Natural killer cell (primary cell): ENCODE measurements at regions of chr9 and their contacts with region 1.

Region 1: GRCh38 chr9:17462869-17463464 is 115.9 kb upstream of the SH3GL2 start:
- DNase-seq: peak in 1 of 2 donors; percentile 59
- ATAC-seq: peak in 1 of 3 donors; percentile 58
- H3K4me3 ChIP-seq: no peak overlapping the region
- H3K4me3 Mint-ChIP-seq: no peak overlapping the region
- H3K27ac ChIP-seq: no peak overlapping the region
- H3K27ac Mint-ChIP-seq: no peak overlapping the region
- H3K4me1 ChIP-seq: no peaks in the 10 kb centered on the region
- H3K4me1 Mint-ChIP-seq: no peaks in the 10 kb centered on the region
- H3K27me3 ChIP-seq: no peaks in the 10 kb centered on the region
- H3K27me3 Mint-ChIP-seq: no peaks in the 10 kb centered on the region
- CTCF ChIP-seq: peak; percentile 91

Region 2: DNA sequence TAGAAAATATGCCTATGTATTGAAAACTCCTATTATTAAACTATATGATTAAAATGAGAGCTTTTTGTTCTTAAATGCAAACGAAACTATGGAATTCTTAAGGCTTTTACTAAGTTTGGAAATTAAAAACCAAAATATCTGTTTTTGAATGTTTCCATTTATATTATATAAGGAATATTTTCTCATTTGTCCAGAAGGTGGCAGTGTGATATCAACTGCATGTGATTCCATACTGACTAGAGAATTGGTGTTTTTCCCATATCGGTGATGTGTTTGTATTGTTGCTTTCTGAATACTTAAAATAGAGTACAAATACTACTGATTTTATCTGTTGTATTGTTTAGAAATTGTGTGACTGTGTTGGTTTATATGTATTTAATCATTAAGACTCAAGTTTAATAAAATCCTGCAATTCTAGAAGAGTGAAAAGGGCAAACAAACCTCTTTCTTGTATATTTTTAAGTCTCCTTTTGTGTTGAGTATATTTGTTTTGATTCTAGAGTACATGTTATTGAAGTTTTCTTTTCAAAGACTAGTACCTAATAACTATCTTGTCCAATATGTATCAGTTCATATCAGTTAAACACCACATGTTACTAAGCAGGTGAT is 1589.3 kb before region 1 on chr9:
- intact Hi-C with region 1: loop called (anchors 1 kb)
- DNase-seq: peak in 1 of 2 donors; percentile 45
- ATAC-seq: peak in 1 of 3 donors; percentile 53
- H3K4me3 ChIP-seq: no peak overlapping the region
- H3K4me3 Mint-ChIP-seq: no peak overlapping the region
- H3K27ac ChIP-seq: no peak overlapping the region
- H3K27ac Mint-ChIP-seq: no peak overlapping the region
- H3K4me1 ChIP-seq: no peaks in the 10 kb centered on the region
- H3K4me1 Mint-ChIP-seq: no peaks in the 10 kb centered on the region
- H3K27me3 ChIP-seq: no peaks in the 10 kb centered on the region
- H3K27me3 Mint-ChIP-seq: no peaks in the 10 kb centered on the region
- CTCF ChIP-seq: peak; percentile 78

Region 3: DNA sequence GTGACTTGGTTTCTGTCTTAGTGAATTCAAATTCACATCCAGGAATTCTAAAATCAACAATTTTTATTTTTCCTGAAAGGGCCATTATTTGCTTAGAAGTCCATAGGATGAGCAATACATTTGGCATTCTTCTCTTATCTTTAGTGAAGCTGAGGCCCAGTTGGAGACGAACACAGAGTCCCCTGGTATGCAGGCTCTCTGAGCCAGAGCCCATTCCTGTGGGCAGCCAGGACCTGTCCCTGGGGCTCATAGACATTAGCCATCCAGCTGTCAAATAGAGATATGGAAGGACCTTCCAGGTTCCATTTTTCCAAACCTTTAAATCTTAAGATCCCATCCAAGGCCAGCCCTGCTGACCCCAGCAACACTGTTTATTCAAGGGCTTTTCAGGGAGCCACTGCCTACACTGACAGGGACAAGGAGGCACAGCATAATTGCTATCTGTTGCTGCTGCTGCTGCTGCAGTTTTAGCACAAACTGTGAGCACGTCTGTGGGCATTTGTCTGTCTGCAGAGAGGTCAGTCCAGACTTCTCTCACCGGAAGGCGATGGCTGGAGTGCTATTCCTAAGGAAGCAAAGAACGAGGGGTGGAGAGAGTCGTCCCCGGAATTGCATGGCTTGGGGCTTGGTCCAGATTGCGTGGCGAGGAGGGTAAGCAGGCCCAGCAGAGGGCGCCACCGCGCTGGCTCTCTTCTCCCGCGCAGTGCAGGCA is 1271.1 kb before region 1 on chr9:
- intact Hi-C with region 1: loop called (anchors 1 kb)
- DNase-seq: peak; percentile 29 to 50
- ATAC-seq: peak; percentile 38 to 84 (median 67)
- H3K4me3 ChIP-seq: no peak overlapping the region
- H3K4me3 Mint-ChIP-seq: no peak overlapping the region
- H3K27ac ChIP-seq: no peak overlapping the region
- H3K27ac Mint-ChIP-seq: no peak overlapping the region
- H3K4me1 ChIP-seq: no peaks in the 10 kb centered on the region
- H3K4me1 Mint-ChIP-seq: peaks cover 4 to 7% of the 10 kb centered on the region in 2 donors
- H3K27me3 ChIP-seq: no peaks in the 10 kb centered on the region
- H3K27me3 Mint-ChIP-seq: peaks cover 7 to 31% of the 10 kb centered on the region in 2 donors
- CTCF ChIP-seq: peak; percentile 40

Region 4: DNA sequence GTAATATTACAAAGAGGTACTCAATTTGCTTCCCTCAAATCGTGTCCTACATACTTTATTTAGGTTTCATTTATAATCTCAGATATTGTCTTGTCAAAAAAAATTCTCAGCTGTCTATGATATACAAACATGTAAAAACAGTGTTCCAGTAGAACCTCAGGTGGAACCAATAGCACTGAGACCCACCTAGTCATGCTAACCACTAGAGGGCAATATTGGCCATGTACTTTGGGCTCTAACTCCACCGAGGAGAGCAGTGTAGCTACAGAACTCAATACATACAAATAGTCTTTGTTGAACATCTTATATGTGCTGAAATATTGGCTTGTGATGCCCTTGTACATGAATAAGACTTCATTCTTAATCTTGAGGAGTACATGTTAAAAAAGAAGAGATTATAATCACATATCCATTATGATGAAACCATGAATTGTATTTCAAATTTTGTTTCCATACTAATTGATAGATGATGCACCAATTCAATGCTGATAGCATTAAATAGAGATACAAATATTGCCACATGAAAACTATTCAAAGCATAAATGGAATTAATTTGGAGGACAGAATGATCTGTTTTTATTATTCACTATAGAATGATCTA is 399.3 kb before region 1 on chr9:
- intact Hi-C with region 1: loop called (anchors 2 kb)
- DNase-seq: peak in 1 of 2 donors; percentile 16
- ATAC-seq: peak; percentile 42 to 83 (median 65)
- H3K4me3 ChIP-seq: no peak overlapping the region
- H3K4me3 Mint-ChIP-seq: no peak overlapping the region
- H3K27ac ChIP-seq: no peak overlapping the region
- H3K27ac Mint-ChIP-seq: no peak overlapping the region
- H3K4me1 ChIP-seq: no peaks in the 10 kb centered on the region
- H3K4me1 Mint-ChIP-seq: peaks cover 0 to 4% of the 10 kb centered on the region in 2 donors
- H3K27me3 ChIP-seq: no peaks in the 10 kb centered on the region
- H3K27me3 Mint-ChIP-seq: peaks cover 12 to 49% of the 10 kb centered on the region in 2 donors
- CTCF ChIP-seq: peak; percentile 77

Region 5: DNA sequence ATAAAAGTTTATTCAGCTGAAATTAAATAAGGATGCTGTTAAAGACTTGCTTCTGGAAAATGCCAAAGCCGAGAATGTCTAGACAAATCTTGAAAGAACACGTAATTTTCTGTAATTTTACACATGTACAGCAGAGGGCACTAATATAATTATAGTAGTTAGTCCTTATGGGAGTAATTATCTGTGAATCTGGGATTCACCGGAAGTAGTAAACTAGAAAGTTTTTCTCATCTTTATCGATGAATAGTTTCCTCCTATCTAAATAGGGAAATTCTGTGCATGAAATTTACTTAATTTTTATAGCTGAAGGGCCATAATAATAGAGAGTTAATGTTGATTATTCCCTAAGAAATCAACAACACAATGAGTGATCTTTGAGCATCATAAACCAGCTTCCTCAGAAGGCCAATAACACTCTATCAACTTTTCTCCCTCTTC is 346.5 kb before region 1 on chr9:
- intact Hi-C with region 1: loop called (anchors 1 kb)
- DNase-seq: no peak
- ATAC-seq: no peak
- H3K4me3 ChIP-seq: no peak overlapping the region
- H3K4me3 Mint-ChIP-seq: no peak overlapping the region
- H3K27ac ChIP-seq: no peak overlapping the region
- H3K27ac Mint-ChIP-seq: no peak overlapping the region
- H3K4me1 ChIP-seq: no peaks in the 10 kb centered on the region
- H3K4me1 Mint-ChIP-seq: no peaks in the 10 kb centered on the region
- H3K27me3 ChIP-seq: no peaks in the 10 kb centered on the region
- H3K27me3 Mint-ChIP-seq: peaks cover under 1 to 22% of the 10 kb centered on the region in 2 donors
- CTCF ChIP-seq: peak; percentile 21

Region 6: DNA sequence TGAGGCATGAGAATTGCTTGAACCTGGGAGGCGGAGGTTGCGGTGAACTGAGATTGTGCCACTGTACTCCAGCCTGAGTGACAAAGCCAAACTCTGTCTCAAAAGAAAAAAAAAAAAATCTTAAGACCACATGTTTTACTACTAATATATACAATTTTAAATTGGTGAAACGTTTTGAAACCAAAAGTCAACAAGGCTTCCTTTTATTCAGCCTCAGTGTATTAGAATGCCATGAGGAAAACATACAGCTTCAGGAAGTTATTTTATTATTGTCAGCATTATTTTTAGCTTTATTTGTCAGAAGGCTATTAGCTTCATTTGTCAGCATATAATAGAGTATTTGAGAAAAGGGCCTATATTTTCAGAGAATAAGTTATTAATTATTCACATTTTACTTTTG is 48.0 kb before region 1 on chr9:
- intact Hi-C with region 1: no loop called
- DNase-seq: no peak
- ATAC-seq: no peak
- H3K4me3 ChIP-seq: no peak overlapping the region
- H3K4me3 Mint-ChIP-seq: no peak overlapping the region
- H3K27ac ChIP-seq: no peak overlapping the region
- H3K27ac Mint-ChIP-seq: no peak overlapping the region
- H3K4me1 ChIP-seq: no peaks in the 10 kb centered on the region
- H3K4me1 Mint-ChIP-seq: no peaks in the 10 kb centered on the region
- H3K27me3 ChIP-seq: no peaks in the 10 kb centered on the region
- H3K27me3 Mint-ChIP-seq: no peaks in the 10 kb centered on the region
- CTCF ChIP-seq: no peak

Region 7: GRCh38 chr9:17651725-17652124 is 188.8 kb after region 1 on chr9:
- intact Hi-C with region 1: no loop called
- DNase-seq: no peak
- ATAC-seq: no peak
- H3K4me3 ChIP-seq: no peak overlapping the region
- H3K4me3 Mint-ChIP-seq: no peak overlapping the region
- H3K27ac ChIP-seq: no peak overlapping the region
- H3K27ac Mint-ChIP-seq: no peak overlapping the region
- H3K4me1 ChIP-seq: no peaks in the 10 kb centered on the region
- H3K4me1 Mint-ChIP-seq: no peaks in the 10 kb centered on the region
- H3K27me3 ChIP-seq: no peaks in the 10 kb centered on the region
- H3K27me3 Mint-ChIP-seq: no peaks in the 10 kb centered on the region
- CTCF ChIP-seq: no peak